PC-9 (cell line): ENCODE measurements at regions of chr1 and their contacts with region 1.

Region 1: DNA sequence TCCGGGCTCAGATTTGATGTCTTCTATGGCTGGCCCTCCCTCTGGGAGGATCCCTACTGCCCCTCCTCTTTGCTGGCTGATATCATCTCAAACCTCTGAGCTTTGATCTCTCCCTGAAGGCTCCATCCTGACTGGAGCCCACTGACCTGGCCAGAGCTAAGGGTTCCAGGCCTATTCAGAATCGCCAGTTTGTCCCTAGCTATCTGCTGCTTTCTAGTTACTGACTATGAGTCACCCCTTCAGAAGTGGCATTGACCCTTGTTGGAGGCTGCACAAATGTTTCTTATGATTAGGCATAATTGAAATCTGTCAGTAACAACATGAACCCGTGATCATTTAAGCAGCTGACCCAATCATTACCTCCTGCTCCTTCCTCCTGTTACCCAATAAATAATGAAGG is 87.1 kb downstream of the ABCA4 start:
- DNase-seq: no peak
- H3K4me3 ChIP-seq: no peak overlapping the region
- H3K27ac ChIP-seq: no peak overlapping the region
- H3K4me1 ChIP-seq: peaks cover 36% of the 10 kb centered on the region
- H3K27me3 ChIP-seq: no peaks in the 10 kb centered on the region
- CTCF ChIP-seq: no peak

Region 2: DNA sequence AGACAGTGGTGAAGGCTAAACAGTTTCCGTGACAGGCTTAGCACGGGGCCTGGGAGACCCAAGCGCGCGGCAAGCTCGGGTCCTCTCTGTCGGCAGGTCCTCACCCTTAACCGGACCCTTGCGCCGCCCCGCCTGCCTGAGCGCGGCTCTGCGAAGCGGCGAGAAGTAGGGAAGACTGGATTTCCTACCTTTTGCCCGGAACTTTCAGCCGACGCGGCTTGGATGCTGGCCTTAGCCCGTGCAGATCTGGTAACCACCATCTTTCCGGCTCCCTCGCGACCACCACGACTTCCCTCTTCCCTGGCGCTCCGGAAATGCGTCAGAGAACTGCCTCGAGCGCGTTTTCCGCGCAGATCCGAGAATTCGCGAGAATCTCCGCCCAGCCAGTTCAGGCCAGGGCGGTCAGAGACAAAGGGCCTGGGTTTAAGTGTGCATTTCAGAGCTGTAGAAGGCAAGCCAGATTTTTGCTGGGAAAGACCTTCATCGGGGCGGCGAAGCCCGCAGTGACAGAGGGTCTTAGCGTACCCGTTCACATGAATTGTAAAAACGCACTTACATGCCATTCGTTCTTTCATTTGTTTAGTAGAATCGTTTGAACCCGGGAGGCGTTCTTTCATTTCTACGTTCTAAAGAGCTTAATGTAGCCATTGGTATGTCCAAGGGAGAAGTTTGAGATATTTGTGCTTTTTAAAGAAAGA is 154.8 kb before region 1 on chr1 and contains the start of gene DNTTIP2:
- CTCF ChIA-PET with region 1: no interaction called
- POLR2A ChIA-PET with region 1: interaction called, 12 read pairs
- intact Hi-C with region 1: no loop called
- DNase-seq: peak; percentile 88 to 89
- H3K4me3 ChIP-seq: peak within 1 kb of the TSS; percentile 85
- H3K27ac ChIP-seq: peak within 1 kb of the TSS; percentile 95
- H3K4me1 ChIP-seq: peaks cover 29% of the 10 kb centered on the region
- H3K27me3 ChIP-seq: no peaks in the 10 kb centered on the region
- CTCF ChIP-seq: no peak
- total RNA-seq, gene DNTTIP2: 85.7 and 93.4 TPM in 2 replicates

Region 3: DNA sequence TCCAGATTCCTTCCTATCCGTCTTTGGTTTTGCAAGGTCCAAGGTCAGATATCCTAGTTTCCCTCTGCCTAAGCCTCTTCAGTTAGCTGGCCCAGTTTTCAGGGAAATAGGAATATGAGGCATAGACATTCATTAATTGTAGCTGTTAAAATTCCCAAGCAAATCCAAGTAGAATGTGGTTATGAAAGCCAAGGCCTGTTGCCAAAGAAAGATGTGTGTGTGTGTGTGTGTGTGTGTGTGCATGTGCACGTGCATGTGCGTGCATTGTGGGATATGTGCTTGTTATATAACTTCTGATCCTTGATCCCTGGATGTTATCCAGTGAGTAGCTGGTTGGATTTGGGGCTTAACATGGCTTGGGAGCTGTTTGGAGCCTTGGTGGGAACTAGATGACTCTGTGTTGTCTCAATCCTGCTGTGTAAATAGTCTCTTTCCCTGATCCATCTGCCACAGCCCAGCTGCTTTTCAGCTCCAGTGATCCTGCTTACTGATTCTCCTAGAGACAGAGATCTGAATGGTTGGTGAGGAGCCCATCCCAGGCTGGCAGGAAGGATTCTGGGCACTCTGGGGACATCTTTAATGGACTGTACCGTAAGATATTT is 54.0 kb before region 1 on chr1:
- CTCF ChIA-PET with region 1: no interaction called
- POLR2A ChIA-PET with region 1: no interaction called
- intact Hi-C with region 1: no loop called
- DNase-seq: no peak
- H3K4me3 ChIP-seq: no peak overlapping the region
- H3K27ac ChIP-seq: no peak overlapping the region
- H3K4me1 ChIP-seq: peaks cover 15% of the 10 kb centered on the region
- H3K27me3 ChIP-seq: no peaks in the 10 kb centered on the region
- CTCF ChIP-seq: no peak

Region 4: GRCh38 chr1:94111879-94112278 is 78.0 kb after region 1 on chr1:
- CTCF ChIA-PET with region 1: no interaction called
- POLR2A ChIA-PET with region 1: no interaction called
- intact Hi-C with region 1: no loop called
- DNase-seq: no peak
- H3K4me3 ChIP-seq: no peak overlapping the region
- H3K27ac ChIP-seq: no peak overlapping the region
- H3K4me1 ChIP-seq: peaks cover 18% of the 10 kb centered on the region
- H3K27me3 ChIP-seq: no peaks in the 10 kb centered on the region
- CTCF ChIP-seq: no peak

Region 5: GRCh38 chr1:94807742-94808491 is 774.1 kb after region 1 on chr1:
- CTCF ChIA-PET with region 1: no interaction called
- POLR2A ChIA-PET with region 1: interaction called, 17 read pairs
- intact Hi-C with region 1: no loop called
- DNase-seq: peak; percentile 70 to 89
- H3K4me3 ChIP-seq: no peak overlapping the region
- H3K27ac ChIP-seq: 0 out of 2 replicates have a peak overlapping the region, but pooled peaks have one; percentile 16
- H3K4me1 ChIP-seq: peaks cover 16% of the 10 kb centered on the region
- H3K27me3 ChIP-seq: no peaks in the 10 kb centered on the region
- CTCF ChIP-seq: no peak